ENCODE measurements at regions of chr14 and their contacts with region 1.

Region 1: DNA sequence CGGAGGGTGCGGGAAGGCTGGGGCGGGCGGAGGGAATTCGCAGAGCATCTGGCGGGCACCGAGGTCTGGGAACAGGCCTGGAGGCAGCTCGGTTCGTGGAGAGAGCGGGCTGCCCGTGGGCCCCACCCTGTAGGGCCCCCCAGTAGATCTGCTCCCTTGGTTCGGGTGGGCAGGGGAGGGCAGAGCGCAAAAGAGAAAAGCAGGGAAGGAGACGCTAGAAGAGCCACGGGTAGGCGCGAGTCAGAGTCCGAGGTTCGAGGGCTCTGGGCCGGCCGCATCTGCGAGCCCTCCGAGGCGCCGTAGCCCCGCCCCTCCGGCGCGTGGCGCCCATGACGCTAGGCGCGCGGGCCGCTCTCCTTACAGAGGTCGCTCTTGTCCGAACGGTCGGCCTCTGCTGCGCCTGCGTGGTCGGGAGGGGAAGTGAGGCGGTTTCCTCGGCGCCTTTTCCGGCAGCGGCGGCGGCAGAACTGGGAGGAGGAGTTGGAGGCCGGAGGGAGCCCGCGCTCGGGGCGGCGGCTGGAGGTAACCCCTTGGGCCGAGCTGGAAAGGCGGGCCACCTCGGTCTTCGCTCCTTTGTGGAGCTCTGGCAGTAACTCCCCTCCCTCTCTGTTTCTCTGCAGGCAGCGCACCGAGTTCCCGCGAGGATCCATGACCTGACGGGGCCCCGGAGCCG is at the start of gene ARF6:
- H3K4me3 ChIP-seq: peak within 1 kb of the TSS; percentile 90
- H3K27ac ChIP-seq: peak within 1 kb of the TSS; percentile 99
- H3K4me1 ChIP-seq: peaks cover 5% of the 10 kb centered on the region; the same call in 1 of the 2 replicates
- CTCF ChIP-seq: peak; percentile 74

Region 2: DNA sequence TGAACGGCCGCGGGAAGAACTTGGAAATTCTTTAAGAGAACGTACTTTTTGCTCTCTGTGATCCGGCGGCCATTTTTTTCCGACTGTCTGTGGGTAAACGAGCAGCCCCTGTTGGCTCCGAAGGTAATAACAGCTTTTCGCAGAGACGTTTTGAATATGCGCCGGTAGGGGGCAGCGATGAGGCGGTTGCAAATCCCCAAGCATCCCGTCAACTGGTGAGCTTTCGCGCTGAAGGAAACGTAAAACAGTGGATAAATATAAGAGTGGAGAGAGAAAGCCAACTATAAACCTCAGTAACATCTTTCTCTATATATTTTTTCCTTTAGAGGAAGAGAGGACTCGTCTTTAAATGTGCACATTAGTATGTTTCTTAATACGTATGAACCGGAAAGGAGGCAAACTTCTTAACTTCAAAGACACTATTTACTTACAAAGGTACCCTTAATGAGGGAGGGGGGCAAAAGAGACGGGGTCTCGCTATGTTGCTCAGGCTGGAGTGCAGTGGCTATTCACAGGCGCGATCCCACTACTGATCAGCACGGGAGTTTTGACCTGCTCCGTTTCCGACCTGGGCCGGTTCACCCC is 30.6 kb before region 1 on chr14:
- CTCF ChIA-PET with region 1: interaction called, 12 read pairs
- POLR2A ChIA-PET with region 1: interaction called, 19 read pairs
- H3K4me3 ChIP-seq: peak overlapping the region; percentile 77
- H3K27ac ChIP-seq: peak overlapping the region; percentile 75
- H3K4me1 ChIP-seq: peaks cover 2% of the 10 kb centered on the region; the same call in 1 of the 2 replicates
- CTCF ChIP-seq: peak; percentile 96

Region 3: GRCh38 chr14:49867831-49868723 is 24.7 kb before region 1 on chr14:
- CTCF ChIA-PET with region 1: interaction called, 8 read pairs
- POLR2A ChIA-PET with region 1: interaction called, 20 read pairs
- H3K4me3 ChIP-seq: peak overlapping the region; percentile 64
- H3K27ac ChIP-seq: peak overlapping the region; percentile 75
- H3K4me1 ChIP-seq: peaks cover 7% of the 10 kb centered on the region; the same call in 1 of the 2 replicates
- CTCF ChIP-seq: no peak